ENCODE measurements at regions of chr5 and their contacts with region 1.

Region 1: GRCh38 chr5:79474367-79475151 is 39.4 kb downstream of the HOMER1 start:
- DNase-seq: peak; percentile 13
- CTCF ChIP-seq: no peak

Region 2: DNA sequence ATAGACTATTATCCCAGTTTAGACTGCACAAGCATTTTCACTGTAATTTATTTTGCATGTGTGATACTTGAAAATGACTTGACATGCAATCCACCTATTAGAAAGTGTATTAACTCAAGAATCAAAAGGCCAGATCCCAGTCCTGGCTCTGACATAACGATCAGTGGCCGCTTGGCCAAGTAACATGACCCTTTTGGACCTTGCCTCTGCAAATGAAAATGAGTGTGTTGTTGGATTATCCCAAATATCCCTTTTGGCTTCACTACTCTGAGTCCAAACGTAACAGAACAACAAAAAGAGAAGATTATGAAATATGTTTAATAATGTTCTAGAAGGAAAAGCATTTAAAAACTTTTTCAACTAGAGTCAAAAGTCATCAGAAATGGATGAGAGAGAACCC is 424.1 kb before region 1 on chr5:
- in situ Hi-C with region 1: no loop called
- DNase-seq: no peak
- CTCF ChIP-seq: no peak

Region 3: GRCh38 chr5:79133657-79134451 is 340.7 kb before region 1 on chr5:
- in situ Hi-C with region 1: loop called (anchors 10 kb)
- DNase-seq: peak; percentile 68
- CTCF ChIP-seq: peak; percentile 80

Measured in GM13977 (cell line).